ENCODE measurements at regions of chr11 and their contacts with region 1.

Region 1: DNA sequence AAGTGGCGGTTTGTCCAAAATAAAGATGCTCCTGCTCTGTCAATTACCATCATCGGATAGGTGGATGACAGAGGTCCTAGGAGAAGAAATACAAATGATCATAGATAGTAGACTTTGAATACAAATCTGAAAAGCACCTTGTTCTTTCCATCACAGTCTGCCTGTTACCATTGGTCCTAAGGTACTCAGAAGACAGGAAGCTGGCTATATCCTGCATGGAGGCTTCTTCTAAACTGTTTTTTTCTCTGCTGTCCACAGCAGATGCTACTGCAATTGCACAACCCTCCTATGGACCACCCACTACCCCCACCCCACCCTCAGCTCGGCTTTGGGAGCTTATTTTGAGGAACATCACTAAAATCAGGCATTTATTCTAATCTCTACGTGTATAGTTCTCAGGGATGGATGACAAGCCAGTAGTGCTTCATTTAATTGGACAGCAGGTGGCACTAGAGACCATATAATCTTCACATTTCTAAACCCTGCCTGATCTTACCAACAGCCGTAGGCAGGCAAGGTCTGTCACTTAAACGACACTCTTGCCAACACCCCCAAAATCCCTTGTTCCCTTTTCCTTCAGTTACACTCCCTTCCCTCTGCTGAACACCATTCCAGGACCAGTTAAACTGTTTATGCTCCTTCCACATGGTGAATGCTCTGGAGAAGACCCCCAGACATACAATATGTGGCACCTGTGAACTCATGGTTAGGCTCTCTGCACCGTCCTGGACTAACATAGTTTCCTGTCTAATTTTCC is 6.6 kb upstream of the PTS start:
- DNase-seq: peak; percentile 78
- ATAC-seq: peak; percentile 98
- H3K4me3 ChIP-seq: no peak overlapping the region
- H3K27ac ChIP-seq: no peak overlapping the region
- H3K4me1 ChIP-seq: 0 out of 2 replicates have a peak, but pooled peaks cover 4% of the 10 kb centered on the region
- H3K27me3 ChIP-seq: no peaks in the 10 kb centered on the region
- CTCF ChIP-seq: peak; percentile 88

Region 2: DNA sequence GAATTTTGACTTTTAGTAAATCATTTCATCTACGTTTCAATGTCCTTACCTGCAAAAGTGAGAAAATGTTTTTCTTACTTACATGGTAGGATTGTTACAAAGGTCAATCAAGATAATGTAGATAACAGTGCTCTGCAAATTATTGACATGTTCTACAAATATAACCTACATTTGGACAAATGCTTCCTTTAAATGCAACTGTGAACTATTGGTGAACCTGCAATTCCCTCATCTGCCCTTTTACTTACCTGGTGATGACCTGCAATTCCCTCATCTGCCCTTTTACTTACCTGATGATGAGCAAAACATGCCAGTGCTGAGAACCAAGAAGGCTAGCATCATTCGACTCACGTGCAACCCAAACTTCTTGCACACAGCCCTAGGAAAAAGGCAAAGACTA is 359.4 kb before region 1 on chr11:
- CTCF ChIA-PET with region 1: no interaction called
- POLR2A ChIA-PET with region 1: no interaction called
- in situ Hi-C with region 1: no loop called
- intact Hi-C with region 1: no loop called
- DNase-seq: no peak
- ATAC-seq: no peak
- H3K4me3 ChIP-seq: no peak overlapping the region
- H3K27ac ChIP-seq: no peak overlapping the region
- H3K4me1 ChIP-seq: no peaks in the 10 kb centered on the region
- H3K27me3 ChIP-seq: no peaks in the 10 kb centered on the region
- CTCF ChIP-seq: no peak

Region 3: DNA sequence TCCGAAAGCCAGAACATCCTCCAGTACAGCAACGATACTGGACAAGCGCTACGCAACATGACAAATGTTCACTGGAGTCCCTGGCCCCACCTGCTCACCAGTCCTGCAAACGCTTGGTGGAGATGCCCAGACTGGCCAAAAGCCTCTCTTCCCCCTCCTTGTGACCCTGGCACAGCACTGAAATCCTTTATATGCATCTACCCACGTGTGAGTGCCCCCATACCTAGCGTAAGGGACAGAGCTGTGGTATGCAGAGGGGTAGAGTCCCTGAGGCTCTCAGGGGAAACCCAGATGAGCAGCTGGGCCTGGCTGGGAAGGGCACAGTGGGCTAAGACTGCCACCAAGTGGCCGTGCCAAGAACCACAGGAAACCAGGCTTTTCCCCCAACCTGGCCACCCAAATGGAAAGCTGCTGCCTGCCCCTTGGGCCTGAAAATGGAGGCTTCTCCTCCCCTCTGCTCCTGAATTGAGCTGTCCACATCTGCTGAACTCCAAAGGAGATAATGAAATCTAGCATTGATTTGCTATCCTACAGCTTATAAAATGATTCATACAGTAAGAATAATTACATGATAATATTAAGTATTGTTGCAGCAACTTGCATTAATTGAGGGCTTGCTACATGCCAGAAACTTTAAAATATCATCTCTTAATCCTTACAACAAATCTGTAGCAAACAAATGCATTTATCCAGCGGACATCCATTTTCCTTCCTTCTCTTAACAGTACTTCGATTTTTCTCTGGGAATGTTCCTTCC is 1070.0 kb after region 1 on chr11:
- CTCF ChIA-PET with region 1: no interaction called
- POLR2A ChIA-PET with region 1: no interaction called
- in situ Hi-C with region 1: no loop called
- intact Hi-C with region 1: loop called (anchors 10 kb)
- DNase-seq: peak; percentile 53
- ATAC-seq: peak; percentile 89
- H3K4me3 ChIP-seq: no peak overlapping the region
- H3K27ac ChIP-seq: no peak overlapping the region
- H3K4me1 ChIP-seq: no peaks in the 10 kb centered on the region
- H3K27me3 ChIP-seq: no peaks in the 10 kb centered on the region; the same call in 1 of the 2 replicates
- CTCF ChIP-seq: peak; percentile 96

Measured in Panc1 (cell line).